Ascending aorta (tissue), 2 donors: ENCODE measurements at regions of chr1 and their contacts with region 1.

Region 1: GRCh38 chr1:151968058-151968457 is 25.6 kb downstream of the S100A10 start:
- DNase-seq: no peak
- H3K4me3 ChIP-seq: no peak overlapping the region
- H3K27ac ChIP-seq: no peak overlapping the region
- H3K4me1 ChIP-seq: peaks cover 0 to 3% of the 10 kb centered on the region in 2 donors
- H3K27me3 ChIP-seq: no peaks in the 10 kb centered on the region
- CTCF ChIP-seq: peak; percentile 58 to 80 (median 62)

Region 2: DNA sequence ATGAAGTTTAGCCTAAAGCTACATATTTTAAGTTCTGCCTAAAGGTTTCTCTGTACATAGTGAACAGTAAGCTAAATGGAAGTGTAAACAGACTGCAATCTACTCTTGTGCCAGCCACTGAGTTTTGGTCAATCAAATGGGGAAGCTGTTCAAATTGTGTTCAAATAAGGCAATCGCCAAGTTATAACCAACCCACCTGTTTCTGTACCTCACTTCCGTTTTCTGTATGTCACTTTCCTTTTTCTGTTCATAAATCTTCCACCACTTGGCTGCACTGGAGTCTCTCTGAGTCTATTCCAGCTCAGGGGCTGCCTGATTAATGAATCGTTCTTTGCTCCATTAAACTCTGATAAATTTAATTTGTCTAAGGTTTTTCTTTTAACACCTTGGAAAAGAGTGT is 47.9 kb before region 1 on chr1:
- intact Hi-C with region 1: no loop called
- DNase-seq: no peak
- H3K4me3 ChIP-seq: no peak overlapping the region
- H3K27ac ChIP-seq: no peak overlapping the region
- H3K4me1 ChIP-seq: peaks cover 0 to 3% of the 10 kb centered on the region in 2 donors
- H3K27me3 ChIP-seq: no peaks in the 10 kb centered on the region
- CTCF ChIP-seq: no peak

Region 3: GRCh38 chr1:151934048-151934493 is 34.0 kb before region 1 on chr1:
- intact Hi-C with region 1: loop called (anchors 2 kb)
- DNase-seq: no peak
- H3K4me3 ChIP-seq: no peak overlapping the region
- H3K27ac ChIP-seq: no peak overlapping the region
- H3K4me1 ChIP-seq: no peaks in the 10 kb centered on the region
- H3K27me3 ChIP-seq: no peaks in the 10 kb centered on the region
- CTCF ChIP-seq: peak; percentile 71 to 87 (median 78)

Region 4: GRCh38 chr1:152001391-152002249 is 33.6 kb after region 1 on chr1:
- intact Hi-C with region 1: loop called (anchors 1 kb)
- DNase-seq: peak; percentile 66 to 94
- H3K4me3 ChIP-seq: no peak overlapping the region
- H3K27ac ChIP-seq: no peak overlapping the region
- H3K4me1 ChIP-seq: peaks cover 0 to 2% of the 10 kb centered on the region in 2 donors
- H3K27me3 ChIP-seq: no peaks in the 10 kb centered on the region
- CTCF ChIP-seq: peak; percentile 71 to 93 (median 86)